Heart left ventricle (tissue), 16 donors: ENCODE measurements at regions of chr11 and their contacts with region 1.

Region 1: DNA sequence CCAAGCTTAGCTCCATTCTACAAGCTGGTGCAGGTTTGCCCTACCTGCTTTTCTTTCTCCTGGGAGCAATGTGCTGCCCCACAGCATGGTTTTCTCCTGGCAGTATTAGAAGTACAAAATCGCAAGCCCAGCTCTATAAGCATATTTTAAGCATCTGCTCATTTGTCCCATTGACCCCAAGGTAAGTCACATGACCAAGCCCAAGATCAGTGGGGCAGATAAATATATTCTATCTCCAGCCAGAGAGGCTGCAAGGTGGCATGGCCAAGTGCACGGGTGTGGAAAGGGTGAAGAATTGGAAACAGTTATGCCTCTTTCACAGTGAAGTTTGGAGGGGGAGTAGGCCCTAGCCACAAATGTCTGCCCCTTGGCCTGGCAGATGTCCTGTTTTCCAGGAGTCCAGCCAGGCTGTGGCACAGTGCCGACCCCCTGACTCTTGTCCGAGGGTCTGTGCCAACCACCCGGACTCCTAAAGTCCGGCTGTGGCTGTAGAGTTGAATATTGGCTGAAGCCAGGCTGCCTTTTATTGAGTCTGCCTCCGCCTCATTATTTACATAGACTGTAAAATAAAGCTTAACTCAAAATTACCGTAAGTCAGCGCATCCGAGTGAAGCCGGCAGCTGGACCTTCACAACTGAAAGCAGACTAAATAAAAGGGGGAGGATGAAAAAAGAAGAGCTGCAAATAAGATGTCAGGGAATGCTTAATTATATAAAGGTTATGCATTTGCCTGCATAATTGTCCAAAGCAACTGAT is 165.7 kb downstream of the COMMD9 start:
- DNase-seq: no peak
- ATAC-seq: no peak
- H3K4me3 ChIP-seq: no peak overlapping the region
- H3K27ac ChIP-seq: no peak overlapping the region
- H3K4me1 ChIP-seq: no peaks in the 10 kb centered on the region
- H3K27me3 ChIP-seq: peaks cover 0 to 8% (median 0%) of the 10 kb centered on the region in 9 donors
- CTCF ChIP-seq: no peak
- POLR2A ChIP-seq: no peak

Region 2: GRCh38 chr11:35491231-35491871 is 632.2 kb before region 1 on chr11:
- intact Hi-C with region 1: loop called in 1 of 10 experiments (anchors 10 kb)
- DNase-seq: no peak
- ATAC-seq: no peak
- H3K4me3 ChIP-seq: no peak overlapping the region
- H3K27ac ChIP-seq: no peak overlapping the region
- H3K4me1 ChIP-seq: peaks cover 0 to 14% (median 1%) of the 10 kb centered on the region in 12 donors
- H3K27me3 ChIP-seq: peaks cover 0 to 21% (median 0%) of the 10 kb centered on the region in 9 donors
- CTCF ChIP-seq: no peak
- POLR2A ChIP-seq: no peak

Region 3: DNA sequence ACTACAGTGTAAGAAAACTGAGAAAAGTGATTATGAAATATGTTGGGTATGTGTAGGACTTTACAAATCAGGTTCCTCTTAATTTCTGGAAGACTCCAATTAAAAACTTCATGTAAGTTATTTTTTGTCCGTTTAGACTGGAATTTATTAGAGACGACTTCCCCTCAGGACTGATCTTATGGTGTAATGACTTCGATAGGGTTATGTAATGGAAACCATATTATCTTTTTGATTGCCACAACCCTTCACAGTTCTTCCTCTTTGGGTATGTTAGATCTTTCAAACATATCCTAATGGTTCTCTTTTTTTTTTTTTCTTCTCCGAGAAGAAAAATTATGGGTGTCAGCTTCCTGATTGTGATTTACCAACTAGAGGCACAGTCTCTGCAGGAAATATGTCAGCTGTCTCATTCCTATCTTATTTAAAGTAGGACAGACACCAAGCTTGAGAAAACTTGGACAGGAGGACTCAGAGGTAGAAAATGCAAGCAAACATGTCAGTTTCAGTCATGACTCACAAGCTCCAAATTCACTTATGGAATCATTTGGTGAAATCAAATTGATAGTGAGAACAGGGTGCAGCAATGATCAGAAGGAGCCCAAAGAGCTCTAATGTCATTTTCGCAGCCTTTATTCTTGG is 190.7 kb before region 1 on chr11:
- intact Hi-C with region 1: no loop called
- DNase-seq: no peak
- ATAC-seq: peak in 3 of 4 donors; percentile 50 to 60 (median 59)
- H3K4me3 ChIP-seq: no peak overlapping the region
- H3K27ac ChIP-seq: peak overlapping the region in 1 of 12 donors; percentile 89
- H3K4me1 ChIP-seq: peaks cover 0 to 13% (median 2%) of the 10 kb centered on the region in 12 donors
- H3K27me3 ChIP-seq: no peaks in the 10 kb centered on the region
- CTCF ChIP-seq: no peak
- POLR2A ChIP-seq: no peak

Region 4: GRCh38 chr11:36048496-36049247 is 74.9 kb before region 1 on chr11:
- intact Hi-C with region 1: loop called in 1 of 10 experiments (anchors 5 kb)
- DNase-seq: no peak
- ATAC-seq: no peak
- H3K4me3 ChIP-seq: no peak overlapping the region
- H3K27ac ChIP-seq: no peak overlapping the region
- H3K4me1 ChIP-seq: no peaks in the 10 kb centered on the region
- H3K27me3 ChIP-seq: no peaks in the 10 kb centered on the region
- CTCF ChIP-seq: no peak
- POLR2A ChIP-seq: no peak